ENCODE measurements at regions of chr13 and their contacts with region 1.

Region 1: DNA sequence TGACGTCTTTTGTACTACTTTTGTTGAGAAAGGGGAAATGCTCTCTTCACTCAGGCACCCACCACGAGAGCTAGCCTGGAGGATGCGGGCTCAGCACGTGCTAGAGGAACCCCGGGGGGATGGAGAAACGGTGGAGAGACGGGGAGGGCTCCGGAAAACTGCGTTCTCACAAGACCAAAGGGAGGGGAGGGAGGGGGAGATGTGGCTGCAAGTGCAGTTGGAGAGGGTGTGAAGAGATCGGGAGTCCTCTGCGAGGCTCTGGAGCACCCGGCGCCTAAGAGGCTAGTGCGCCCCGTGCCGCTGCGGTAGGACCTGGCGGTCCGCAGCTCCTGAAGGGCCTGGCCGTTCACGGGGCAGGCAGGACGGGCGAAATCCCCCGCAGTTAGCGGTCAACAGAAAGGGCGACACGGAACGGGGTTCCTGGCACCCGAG is 43.4 kb upstream of the XPO4 start:
- DNase-seq: no peak
- ATAC-seq: peak; percentile 42; the same call in 1 of the 3 replicates
- H3K4me3 ChIP-seq: no peak overlapping the region
- H3K27ac ChIP-seq: no peak overlapping the region
- H3K4me1 ChIP-seq: peaks cover 0 to 5% of the 10 kb centered on the region in 2 experiments; a peak in 2 of 5 replicates
- H3K27me3 ChIP-seq: 0 out of 5 replicates have a peak, but pooled peaks cover 0 to 2% of the 10 kb centered on the region in 2 experiments
- CTCF ChIP-seq: no peak
- EP300 ChIP-seq: no peak
- POLR2A ChIP-seq: no peak
- RAD21 ChIP-seq: no peak

Region 2: DNA sequence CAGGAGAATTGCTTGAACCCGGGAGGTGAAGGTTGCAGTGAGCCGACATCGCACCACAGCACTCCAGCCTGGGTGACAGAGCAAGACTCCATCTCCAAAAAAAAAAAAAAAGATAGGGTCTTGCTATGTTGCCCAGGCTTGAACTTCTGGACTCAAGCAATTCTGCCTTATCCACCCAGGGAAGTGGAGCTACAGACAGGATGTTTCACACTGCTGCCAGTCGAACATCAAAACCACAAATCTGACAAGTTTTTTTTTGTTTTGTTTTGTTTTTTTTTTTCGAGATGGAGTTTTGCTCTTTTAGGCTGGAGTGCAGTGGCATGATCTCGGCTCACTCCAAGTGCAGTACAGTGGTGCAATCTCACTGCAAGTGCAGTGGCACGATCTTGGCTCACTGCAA is 54.2 kb before region 1 on chr13:
- CTCF ChIA-PET with region 1: no interaction called
- POLR2A ChIA-PET with region 1: no interaction called
- in situ Hi-C with region 1: no loop called
- intact Hi-C with region 1: no loop called
- DNase-seq: no peak
- ATAC-seq: no peak
- H3K4me3 ChIP-seq: no peak overlapping the region
- H3K27ac ChIP-seq: no peak overlapping the region
- H3K4me1 ChIP-seq: no peaks in the 10 kb centered on the region
- H3K27me3 ChIP-seq: no peaks in the 10 kb centered on the region
- CTCF ChIP-seq: no peak
- EP300 ChIP-seq: no peak
- POLR2A ChIP-seq: no peak
- RAD21 ChIP-seq: no peak

Region 3: DNA sequence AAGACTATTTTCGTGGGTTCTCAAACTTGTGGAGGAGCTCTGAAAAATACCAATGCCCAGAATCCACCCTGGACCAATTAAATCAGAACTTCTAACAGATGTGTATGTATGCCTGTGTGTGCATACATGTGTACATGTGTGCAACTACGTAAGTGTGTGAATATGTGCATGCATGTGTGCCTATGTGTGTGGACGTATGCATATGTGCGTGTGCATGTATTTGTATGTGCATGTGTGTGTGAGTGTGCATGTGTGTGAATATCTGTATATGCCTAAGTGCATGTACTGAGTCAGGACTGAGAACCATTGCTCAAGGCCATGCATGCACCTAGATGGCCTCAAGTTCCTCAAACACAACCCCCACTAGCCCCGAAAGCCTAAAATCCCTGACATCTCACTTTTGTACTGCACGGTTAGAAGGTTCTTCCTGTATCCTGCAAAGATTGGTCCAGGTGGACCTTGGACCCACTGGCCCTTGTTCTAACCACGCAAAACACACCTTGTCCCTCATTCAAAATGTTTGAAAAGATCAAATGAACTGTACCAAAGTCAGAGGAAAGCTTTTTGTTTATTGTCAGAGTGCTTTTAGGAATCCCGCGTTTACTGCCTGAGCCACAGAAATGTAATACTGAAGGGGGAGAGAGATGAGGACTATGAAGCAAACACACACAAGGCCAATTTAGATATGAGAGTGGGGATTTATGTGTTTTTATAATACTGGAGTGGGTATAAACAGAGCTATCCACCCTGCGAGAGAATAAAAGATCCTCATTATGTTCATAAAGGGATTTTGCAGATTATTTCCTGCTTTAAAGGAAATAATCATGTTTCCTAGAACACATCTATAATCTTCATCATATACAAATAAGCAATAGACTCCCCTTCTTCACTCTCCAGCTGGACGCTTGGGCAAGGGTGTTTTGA is 76.3 kb after region 1 on chr13:
- CTCF ChIA-PET with region 1: no interaction called
- POLR2A ChIA-PET with region 1: no interaction called
- in situ Hi-C with region 1: no loop called
- intact Hi-C with region 1: loop called (anchors 10 kb)
- DNase-seq: no peak
- ATAC-seq: no peak
- H3K4me3 ChIP-seq: no peak overlapping the region
- H3K27ac ChIP-seq: no peak overlapping the region
- H3K4me1 ChIP-seq: peaks cover 0 to 6% of the 10 kb centered on the region in 2 experiments; a peak in 2 of 5 replicates
- H3K27me3 ChIP-seq: no peaks in the 10 kb centered on the region
- CTCF ChIP-seq: no peak
- EP300 ChIP-seq: no peak
- POLR2A ChIP-seq: no peak
- RAD21 ChIP-seq: no peak

Region 4: DNA sequence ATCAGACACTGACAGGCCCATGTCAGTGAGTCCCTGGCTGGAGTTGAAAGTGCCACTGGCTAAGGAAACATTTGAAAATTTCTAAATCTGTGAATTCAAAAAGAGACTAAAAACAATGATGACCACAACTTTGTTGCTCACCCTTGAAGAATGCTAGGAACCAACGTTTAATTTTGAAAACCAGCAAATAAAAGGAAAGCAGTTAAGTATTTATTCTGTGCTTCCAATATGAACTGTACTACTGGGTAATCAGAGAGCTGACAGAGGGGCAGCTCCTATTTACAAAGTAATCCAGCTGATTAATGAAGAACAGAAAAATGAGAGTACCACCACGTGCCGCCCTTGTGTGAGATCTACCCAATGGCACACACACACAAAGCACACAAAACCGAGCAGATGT is 160.1 kb after region 1 on chr13:
- CTCF ChIA-PET with region 1: interaction called, 3 read pairs
- POLR2A ChIA-PET with region 1: no interaction called
- in situ Hi-C with region 1: loop called (anchors 10 kb)
- intact Hi-C with region 1: no loop called
- DNase-seq: no peak
- ATAC-seq: no peak
- H3K4me3 ChIP-seq: no peak overlapping the region
- H3K27ac ChIP-seq: no peak overlapping the region
- H3K4me1 ChIP-seq: peaks cover 0 to 2% of the 10 kb centered on the region in 2 experiments; a peak in 1 of 5 replicates
- H3K27me3 ChIP-seq: no peaks in the 10 kb centered on the region
- CTCF ChIP-seq: no peak
- EP300 ChIP-seq: no peak
- POLR2A ChIP-seq: no peak
- RAD21 ChIP-seq: no peak

Region 5: GRCh38 chr13:21176220-21176982 is 230.4 kb after region 1 on chr13 and contains the starts of genes MRPL57 and SKA3:
- CTCF ChIA-PET with region 1: interaction called, 8 read pairs
- POLR2A ChIA-PET with region 1: interaction called, 4 read pairs
- in situ Hi-C with region 1: no loop called
- intact Hi-C with region 1: loop called (anchors 1 kb)
- DNase-seq: peak; percentile 85 to 93 (median 88)
- ATAC-seq: peak; percentile 93
- H3K4me3 ChIP-seq: peak within 1 kb of the TSS; percentile 83
- H3K27ac ChIP-seq: peak within 1 kb of the TSS; percentile 94
- H3K4me1 ChIP-seq: peaks cover 6 to 8% of the 10 kb centered on the region in 2 experiments; a peak in 3 of 5 replicates
- H3K27me3 ChIP-seq: no peaks in the 10 kb centered on the region
- CTCF ChIP-seq: peak in 1 of 3 experiments; percentile 37; a peak in 2 of 6 replicates
- EP300 ChIP-seq: no peak
- POLR2A ChIP-seq: peak; percentile 94
- RAD21 ChIP-seq: no peak
- polyA plus RNA-seq, gene MRPL57: 6.5 to 12.5 TPM
- polyA plus RNA-seq, gene SKA3: 17.7 to 25.8 TPM

Measured in K562 (cell line).